T-cell (primary cell): ENCODE measurements at regions of chr4 and their contacts with region 1.

Region 1: DNA sequence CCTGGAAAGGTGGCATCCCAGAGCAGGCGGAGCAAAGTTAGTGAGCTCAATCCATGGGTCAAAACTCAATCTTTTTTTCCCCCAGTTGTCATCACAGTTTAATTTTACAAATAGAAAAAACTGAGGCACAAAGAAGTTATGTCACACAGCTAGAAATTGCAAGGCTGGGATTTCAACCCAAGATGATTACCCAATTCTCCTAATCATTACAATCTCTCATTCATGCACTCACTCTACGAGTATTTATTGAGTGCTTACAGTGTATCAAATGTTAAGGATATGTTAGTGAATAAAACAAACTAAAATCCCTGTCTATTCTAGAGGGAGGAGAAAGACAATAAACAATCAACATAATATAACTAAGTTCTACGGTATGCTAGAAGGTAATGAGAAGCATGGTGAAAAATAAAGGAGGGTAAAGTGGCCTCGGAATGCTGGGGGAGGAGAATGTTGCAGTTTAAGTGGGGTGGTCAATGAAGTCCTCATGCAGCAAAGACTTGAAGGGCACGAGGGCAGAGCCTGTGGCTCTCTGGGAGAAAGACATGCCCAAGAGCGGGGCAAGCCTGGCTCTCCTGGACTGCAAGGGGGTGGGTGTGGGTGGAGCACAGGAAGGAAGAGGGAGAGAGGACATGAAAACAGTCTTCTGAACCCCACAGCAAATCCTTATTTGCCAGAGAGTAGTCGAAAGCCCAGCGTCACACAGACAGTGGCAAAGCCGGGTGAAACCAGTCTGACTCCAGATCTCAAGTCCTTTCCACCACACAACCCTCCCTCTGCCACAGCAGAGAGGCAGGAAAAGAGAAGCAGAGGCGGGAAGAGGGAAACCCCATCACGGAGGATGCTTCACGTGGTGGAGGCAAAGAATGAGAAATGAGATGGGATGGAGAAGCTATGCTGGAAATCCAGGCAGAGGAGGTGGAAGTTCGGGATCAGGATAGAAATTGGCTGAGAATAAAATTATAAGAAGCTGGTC is 48.3 kb downstream of the RAB33B start:
- DNase-seq: no peak
- ATAC-seq: no peak
- H3K4me3 ChIP-seq: no peak overlapping the region
- H3K4me3 Mint-ChIP-seq: no peak overlapping the region
- H3K27ac ChIP-seq: no peak overlapping the region
- H3K27ac Mint-ChIP-seq: peak overlapping the region in 1 of 2 donors; percentile 19
- H3K4me1 ChIP-seq: no peaks in the 10 kb centered on the region
- H3K4me1 Mint-ChIP-seq: no peaks in the 10 kb centered on the region
- H3K27me3 ChIP-seq: peaks cover 0 to 4% of the 10 kb centered on the region in 2 experiments
- H3K27me3 Mint-ChIP-seq: peaks cover 0 to 4% of the 10 kb centered on the region in 2 donors

Region 2: DNA sequence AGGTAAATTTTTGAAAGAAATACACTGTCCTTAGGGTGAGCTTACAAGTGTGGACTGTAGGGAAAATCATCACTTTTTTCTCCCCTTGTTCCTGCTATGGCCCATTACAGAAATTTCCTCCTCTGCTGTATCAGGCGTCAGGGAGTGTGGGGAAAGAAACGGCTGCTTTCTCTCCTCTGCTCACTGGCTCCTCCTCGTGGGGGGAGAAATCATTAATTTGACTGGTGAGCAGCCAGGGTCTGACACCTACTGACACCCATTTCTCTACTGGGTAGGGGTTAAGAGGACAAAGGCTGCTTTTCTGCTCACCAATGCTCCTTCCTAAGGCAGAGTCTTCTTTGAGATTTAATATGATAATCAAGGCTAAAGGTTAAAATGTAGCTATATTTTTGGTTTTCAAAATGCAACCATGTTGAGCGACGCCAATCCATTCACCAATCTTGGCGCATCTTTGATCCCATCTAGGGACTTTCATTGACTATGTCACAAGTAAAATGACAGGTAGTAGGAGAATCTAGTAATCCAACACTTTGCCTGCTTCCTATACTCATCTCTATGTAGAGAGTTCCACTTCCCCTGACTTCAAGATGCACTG is 28.7 kb after region 1 on chr4:
- CTCF ChIA-PET with region 1: interaction called, 3 to 16 read pairs
- POLR2A ChIA-PET with region 1: no interaction called
- DNase-seq: peak; percentile 6 to 73 (median 49)
- ATAC-seq: peak; percentile 61 to 75 (median 66)
- H3K4me3 ChIP-seq: no peak overlapping the region
- H3K4me3 Mint-ChIP-seq: no peak overlapping the region
- H3K27ac ChIP-seq: no peak overlapping the region
- H3K27ac Mint-ChIP-seq: no peak overlapping the region
- H3K4me1 ChIP-seq: peaks cover 2 to 11% of the 10 kb centered on the region in 2 experiments
- H3K4me1 Mint-ChIP-seq: peaks cover 0 to 14% (median 12%) of the 10 kb centered on the region in 3 donors
- H3K27me3 ChIP-seq: no peaks in the 10 kb centered on the region
- H3K27me3 Mint-ChIP-seq: no peaks in the 10 kb centered on the region